CD8-positive, alpha-beta T cell (primary cell): ENCODE measurements at regions of chr14 and their contacts with region 1.

Region 1: DNA sequence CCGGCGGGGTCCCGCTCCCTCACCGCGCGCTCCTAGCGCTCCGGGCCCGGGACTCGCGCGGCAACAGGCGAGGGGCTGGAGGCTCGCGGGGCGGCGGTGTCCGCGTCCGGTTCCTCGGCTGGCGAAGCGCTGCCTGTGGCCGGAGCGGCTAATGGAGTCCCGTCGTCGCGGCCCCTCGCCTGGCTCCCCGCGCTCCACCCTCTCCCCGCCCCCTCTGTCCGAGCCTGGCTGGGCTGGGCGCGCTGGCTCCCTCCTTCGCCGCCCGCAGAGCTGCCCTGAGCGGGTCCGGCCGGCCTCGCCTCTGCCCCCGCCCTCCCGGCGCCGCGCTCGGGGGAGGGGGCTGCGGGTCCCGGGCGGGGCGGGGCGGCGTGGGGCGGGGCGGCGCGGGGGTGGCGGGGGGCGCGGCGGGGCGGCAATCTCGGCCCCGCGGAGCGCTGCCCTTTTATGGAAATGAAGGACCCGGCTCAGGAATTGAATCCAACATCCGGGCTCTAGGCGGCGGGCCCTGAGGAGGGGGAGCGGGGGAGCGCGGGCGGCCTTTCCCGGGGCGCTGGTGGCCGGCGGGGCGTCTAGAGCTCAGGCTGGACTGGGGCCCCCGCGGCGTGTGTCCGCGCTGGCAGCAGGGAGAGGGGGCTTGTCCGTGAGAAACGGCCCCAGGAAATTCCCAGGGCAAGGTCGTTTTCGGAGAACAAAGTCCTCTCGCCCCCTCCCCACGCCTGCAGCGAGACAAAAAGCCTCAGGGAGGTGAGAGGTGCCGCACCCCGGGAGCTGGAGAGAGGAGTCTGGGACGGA is at the start of gene FERMT2:
- DNase-seq: peak in 4 of 9 experiments; percentile 7 to 29 (median 28)
- ATAC-seq: peak; percentile 48
- H3K4me3 ChIP-seq: peak within 1 kb of the TSS; percentile 50 to 59
- H3K4me3 Mint-ChIP-seq: peak within 1 kb of the TSS; percentile 81
- H3K27ac ChIP-seq: no peak within 1 kb of the TSS
- H3K27ac Mint-ChIP-seq: no peak within 1 kb of the TSS
- H3K4me1 ChIP-seq: peaks cover 20% of the 10 kb centered on the region
- H3K4me1 Mint-ChIP-seq: peaks cover 20% of the 10 kb centered on the region
- H3K27me3 ChIP-seq: peaks cover 29 to 41% of the 10 kb centered on the region in 2 experiments
- H3K27me3 Mint-ChIP-seq: peaks cover 46% of the 10 kb centered on the region
- CTCF ChIP-seq: no peak
- total RNA-seq, gene FERMT2: not detected

Region 2: DNA sequence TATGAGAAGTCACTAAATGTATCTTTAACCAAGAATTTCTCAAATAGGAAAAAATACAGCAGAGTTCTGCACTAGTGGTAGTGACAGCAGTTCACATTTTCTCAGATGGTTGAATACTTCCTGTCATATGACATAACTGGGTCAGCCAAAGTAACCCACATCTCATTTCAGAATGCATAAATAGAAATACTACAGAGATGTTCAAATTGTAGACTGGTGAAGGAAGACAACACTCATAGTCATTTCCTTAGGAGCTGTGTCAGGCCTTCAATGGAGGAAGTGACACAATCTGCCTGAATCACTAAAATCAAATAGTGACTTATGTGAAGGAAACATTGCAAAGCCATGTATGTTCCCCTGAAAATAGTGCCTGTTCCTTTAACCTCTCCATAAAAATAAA is 32.6 kb before region 1 on chr14:
- CTCF ChIA-PET with region 1: no interaction called
- POLR2A ChIA-PET with region 1: interaction called, 3 read pairs
- intact Hi-C with region 1: loop called in 1 of 2 experiments (anchors 2 kb)
- DNase-seq: peak in 5 of 9 experiments; percentile 8 to 85 (median 14)
- ATAC-seq: peak; percentile 95
- H3K4me3 ChIP-seq: no peak overlapping the region
- H3K4me3 Mint-ChIP-seq: no peak overlapping the region
- H3K27ac ChIP-seq: peak overlapping the region; percentile 28 to 84
- H3K27ac Mint-ChIP-seq: peak overlapping the region; percentile 85
- H3K4me1 ChIP-seq: peaks cover 25% of the 10 kb centered on the region
- H3K4me1 Mint-ChIP-seq: peaks cover 33% of the 10 kb centered on the region
- H3K27me3 ChIP-seq: no peaks in the 10 kb centered on the region
- H3K27me3 Mint-ChIP-seq: no peaks in the 10 kb centered on the region
- CTCF ChIP-seq: no peak